Activated CD4-positive, alpha-beta T cell treated with anti-CD3 and anti-CD28 coated beads for 36 hours (primary cell): ENCODE measurements at regions of chr20 and their contacts with region 1.

Region 1: GRCh38 chr20:64255361-64256281 is at the start of gene PCMTD2:
- DNase-seq: peak; percentile 91
- ATAC-seq: peak; percentile 91
- H3K4me3 Mint-ChIP-seq: peak within 1 kb of the TSS; percentile 85
- H3K27ac Mint-ChIP-seq: peak within 1 kb of the TSS; percentile 92
- H3K4me1 Mint-ChIP-seq: peaks cover 46% of the 10 kb centered on the region
- H3K27me3 Mint-ChIP-seq: peaks cover 6% of the 10 kb centered on the region
- total RNA-seq, gene PCMTD2: 32.7 to 37.8 TPM

Region 2: DNA sequence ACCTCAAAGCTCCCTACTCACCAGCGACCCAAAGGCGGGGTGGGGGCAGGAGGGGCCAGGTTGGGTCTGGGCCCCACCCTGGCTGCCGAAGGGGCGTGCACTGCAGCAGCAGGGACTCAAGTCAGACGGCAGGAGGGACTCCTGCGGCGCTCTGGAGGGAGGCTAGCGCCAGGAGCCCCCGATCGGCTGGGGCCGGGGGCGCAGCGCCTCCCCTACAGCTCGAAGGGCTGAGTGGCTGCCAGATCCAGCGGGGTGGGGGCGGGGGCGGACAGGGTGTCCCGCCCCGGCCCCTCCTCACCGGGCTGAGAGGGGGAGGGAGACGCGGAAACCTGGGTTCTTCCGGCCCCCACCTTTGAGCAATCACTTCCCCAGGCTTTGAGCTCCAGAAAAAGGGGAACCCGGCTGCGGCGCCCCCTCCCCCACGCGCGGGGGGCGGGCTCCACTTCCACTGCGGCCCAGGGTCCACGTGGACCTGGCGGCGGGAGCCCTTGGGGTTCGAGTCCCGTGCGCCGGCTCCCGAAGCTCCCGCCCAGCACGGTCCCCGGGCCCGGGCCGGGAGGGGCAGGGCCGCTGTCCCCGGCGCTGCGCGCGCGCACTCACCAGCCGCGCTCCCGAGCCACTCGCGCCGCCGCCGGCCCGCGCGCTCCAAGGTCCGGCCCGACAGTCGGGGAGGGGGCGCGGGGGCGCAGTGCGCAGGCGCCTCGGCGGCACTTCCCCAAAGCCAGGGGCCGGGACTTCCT is 176.2 kb before region 1 on chr20 and contains the start of gene RGS19:
- CTCF ChIA-PET with region 1: no interaction called
- POLR2A ChIA-PET with region 1: no interaction called
- intact Hi-C with region 1: loop called in 1 of 2 experiments (anchors 5 kb)
- DNase-seq: peak; percentile 77
- ATAC-seq: peak; percentile 43
- H3K4me3 Mint-ChIP-seq: peak within 1 kb of the TSS; percentile 90
- H3K27ac Mint-ChIP-seq: peak within 1 kb of the TSS; percentile 88
- H3K4me1 Mint-ChIP-seq: peaks cover 28% of the 10 kb centered on the region
- H3K27me3 Mint-ChIP-seq: peaks cover 3% of the 10 kb centered on the region
- total RNA-seq, gene RGS19: 39.6 to 40.2 TPM

Region 3: DNA sequence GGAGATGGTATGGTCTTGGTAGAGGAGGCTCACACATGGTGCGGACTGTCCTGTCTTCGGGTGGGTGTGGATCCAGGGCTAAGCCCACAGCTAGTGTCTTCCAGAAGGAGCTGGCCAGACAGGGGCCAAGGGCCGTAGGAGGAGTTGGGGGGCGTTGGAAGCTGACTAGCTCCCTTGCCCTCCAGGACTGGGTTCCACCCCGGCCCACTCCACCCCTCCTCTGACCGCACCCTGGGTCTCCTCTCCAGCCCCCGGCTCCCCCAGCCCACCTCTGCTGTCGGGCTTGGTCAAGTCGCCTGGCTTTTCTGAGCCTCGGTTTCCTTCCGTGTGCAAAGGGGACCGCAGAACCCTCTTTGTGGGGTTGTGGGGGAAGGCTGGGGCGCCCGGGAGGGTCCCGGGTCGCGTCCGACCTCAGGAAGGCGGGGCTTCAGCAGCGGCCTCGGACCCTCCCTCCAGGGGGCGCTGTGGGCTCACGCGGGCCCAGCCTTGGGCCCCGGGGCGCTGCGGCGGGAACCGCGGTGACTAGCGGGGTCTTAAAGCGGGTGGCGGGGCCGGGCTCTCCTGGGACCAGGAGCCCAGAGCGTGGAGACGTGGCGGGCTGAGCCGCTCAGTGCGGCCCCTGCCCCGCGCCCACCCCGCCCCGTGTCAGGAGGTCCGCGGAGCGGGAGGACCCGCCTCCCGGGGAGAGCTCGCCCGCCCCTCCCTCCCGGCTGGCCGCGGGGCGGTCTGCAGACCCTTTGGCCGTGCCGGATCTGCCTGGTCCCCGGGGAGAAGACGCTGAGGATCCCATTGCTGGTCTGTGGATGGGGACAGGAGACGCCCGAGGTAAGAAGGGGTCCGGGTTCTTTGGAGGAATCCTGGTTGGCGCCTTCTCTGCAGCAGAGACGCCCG is 153.6 kb before region 1 on chr20:
- CTCF ChIA-PET with region 1: interaction called, 4 read pairs
- POLR2A ChIA-PET with region 1: no interaction called
- intact Hi-C with region 1: loop called in 1 of 2 experiments (anchors 5 kb)
- DNase-seq: peak; percentile 85
- ATAC-seq: peak; percentile 81
- H3K4me3 Mint-ChIP-seq: peak overlapping the region; percentile 58
- H3K27ac Mint-ChIP-seq: no peak overlapping the region
- H3K4me1 Mint-ChIP-seq: peaks cover 23% of the 10 kb centered on the region
- H3K27me3 Mint-ChIP-seq: peaks cover 13% of the 10 kb centered on the region

Region 4: DNA sequence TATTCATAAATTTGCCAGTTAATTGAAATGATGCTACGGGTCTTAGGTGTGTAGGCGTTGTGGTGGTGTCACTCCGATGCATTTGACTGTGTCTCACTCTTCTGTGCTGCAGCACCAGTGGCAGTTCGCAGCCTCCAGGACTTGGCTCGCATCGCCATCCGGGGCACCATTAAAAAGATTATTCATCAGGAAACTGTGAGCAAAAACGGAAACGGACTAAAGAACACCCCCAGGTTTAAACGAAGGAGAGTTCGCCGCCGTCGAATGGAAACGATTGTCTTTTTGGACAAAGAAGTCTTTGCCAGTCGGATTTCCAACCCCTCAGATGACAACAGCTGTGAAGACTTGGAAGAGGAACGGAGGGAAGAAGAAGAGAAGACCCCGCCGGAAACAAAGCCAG is 17.5 kb after region 1 on chr20:
- CTCF ChIA-PET with region 1: interaction called, 10 read pairs
- POLR2A ChIA-PET with region 1: no interaction called
- intact Hi-C with region 1: no loop called
- DNase-seq: no peak
- ATAC-seq: no peak
- H3K4me3 Mint-ChIP-seq: no peak overlapping the region
- H3K27ac Mint-ChIP-seq: no peak overlapping the region
- H3K4me1 Mint-ChIP-seq: no peaks in the 10 kb centered on the region
- H3K27me3 Mint-ChIP-seq: no peaks in the 10 kb centered on the region

Region 5: GRCh38 chr20:64279826-64280459 is 24.3 kb after region 1 on chr20:
- CTCF ChIA-PET with region 1: interaction called, 24 read pairs
- POLR2A ChIA-PET with region 1: no interaction called
- intact Hi-C with region 1: no loop called
- DNase-seq: no peak
- ATAC-seq: no peak
- H3K4me3 Mint-ChIP-seq: no peak overlapping the region
- H3K27ac Mint-ChIP-seq: no peak overlapping the region
- H3K4me1 Mint-ChIP-seq: peaks cover 3% of the 10 kb centered on the region
- H3K27me3 Mint-ChIP-seq: no peaks in the 10 kb centered on the region